ENCODE measurements at regions of chr1 and their contacts with region 1.

Region 1: GRCh38 chr1:240027059-240027462 is 64.6 kb upstream of the FMN2 start:
- DNase-seq: peak; percentile 67
- ATAC-seq: peak; percentile 64
- H3K4me3 ChIP-seq: no peak overlapping the region
- H3K27ac ChIP-seq: no peak overlapping the region
- H3K4me1 ChIP-seq: peaks cover 10% of the 10 kb centered on the region
- H3K27me3 ChIP-seq: no peaks in the 10 kb centered on the region
- CTCF ChIP-seq: peak; percentile 98
- POLR2A ChIP-seq: no peak
- RAD21 ChIP-seq: peak; percentile 96

Region 2: DNA sequence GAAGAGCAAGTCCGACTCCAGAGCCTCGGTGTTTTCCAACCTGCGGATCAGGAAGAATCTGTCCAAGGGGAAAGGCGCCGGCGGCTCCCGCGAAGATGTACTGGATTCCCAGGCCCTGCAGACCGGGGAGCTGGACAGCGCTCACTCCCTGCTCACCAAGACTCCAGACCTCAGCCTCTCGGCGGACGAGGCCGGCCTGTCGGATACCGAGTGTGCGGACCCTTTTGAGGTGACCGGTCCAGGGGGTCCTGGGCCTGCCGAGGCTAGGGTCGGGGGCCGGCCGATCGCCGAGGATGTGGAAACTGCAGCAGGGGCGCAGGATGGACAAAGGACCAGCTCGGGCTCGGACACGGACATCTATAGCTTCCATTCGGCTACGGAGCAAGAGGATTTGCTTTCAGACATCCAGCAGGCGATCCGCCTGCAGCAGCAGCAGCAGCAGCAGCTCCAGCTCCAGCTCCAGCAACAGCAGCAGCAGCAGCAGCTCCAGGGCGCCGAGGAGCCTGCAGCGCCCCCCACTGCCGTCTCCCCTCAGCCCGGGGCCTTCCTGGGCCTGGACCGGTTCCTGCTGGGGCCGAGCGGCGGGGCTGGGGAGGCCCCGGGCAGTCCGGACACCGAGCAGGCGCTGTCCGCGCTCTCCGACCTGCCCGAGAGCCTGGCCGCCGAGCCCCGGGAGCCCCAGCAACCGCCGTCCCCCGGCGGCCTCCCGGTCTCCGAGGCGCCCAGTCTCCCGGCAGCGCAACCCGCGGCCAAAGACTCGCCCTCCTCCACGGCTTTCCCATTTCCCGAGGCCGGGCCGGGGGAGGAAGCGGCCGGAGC is 65.4 kb after region 1 on chr1:
- CTCF ChIA-PET with region 1: interaction called, 6 read pairs
- POLR2A ChIA-PET with region 1: no interaction called
- dilution Hi-C with region 1: no loop called
- in situ Hi-C with region 1: no loop called
- intact Hi-C with region 1: loop called (anchors 1 kb)
- DNase-seq: peak; percentile 74
- ATAC-seq: peak; percentile 57
- H3K4me3 ChIP-seq: peak overlapping the region; percentile 89
- H3K27ac ChIP-seq: peak overlapping the region; percentile 33
- H3K4me1 ChIP-seq: peaks cover 2% of the 10 kb centered on the region; the same call in 1 of the 2 replicates
- H3K27me3 ChIP-seq: no peaks in the 10 kb centered on the region
- CTCF ChIP-seq: peak; percentile 35
- POLR2A ChIP-seq: no peak
- RAD21 ChIP-seq: peak; percentile 15; the same call in 1 of the 2 replicates

Region 3: DNA sequence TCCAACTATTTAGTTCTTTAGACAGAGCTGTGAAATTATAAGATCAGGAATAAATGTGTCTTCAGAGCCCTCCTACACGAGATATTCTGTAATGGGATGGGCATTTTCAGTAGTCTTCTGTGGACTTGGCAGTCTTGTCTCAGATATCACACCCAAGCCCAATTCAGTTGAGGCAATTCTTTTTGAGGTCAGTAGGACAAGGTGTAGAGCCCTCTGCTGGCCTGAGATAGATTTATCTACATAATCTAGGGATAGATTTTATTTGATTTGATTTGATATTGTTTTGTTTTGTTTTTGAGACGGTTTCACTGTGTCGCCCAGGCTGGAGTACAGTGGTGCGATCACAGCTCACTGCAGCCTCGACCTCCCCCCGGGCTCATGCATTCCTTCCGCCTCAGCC is 142.1 kb after region 1 on chr1:
- CTCF ChIA-PET with region 1: interaction called, 4 read pairs
- POLR2A ChIA-PET with region 1: no interaction called
- dilution Hi-C with region 1: no loop called
- in situ Hi-C with region 1: no loop called
- intact Hi-C with region 1: loop called (anchors 5 kb)
- DNase-seq: peak; percentile 31
- ATAC-seq: peak; percentile 34; the same call in 1 of the 2 replicates
- H3K4me3 ChIP-seq: no peak overlapping the region
- H3K27ac ChIP-seq: no peak overlapping the region
- H3K4me1 ChIP-seq: no peaks in the 10 kb centered on the region
- H3K27me3 ChIP-seq: no peaks in the 10 kb centered on the region
- CTCF ChIP-seq: peak; percentile 40
- POLR2A ChIP-seq: no peak
- RAD21 ChIP-seq: 0 out of 2 replicates have a peak, but pooled peaks have one; percentile 16

Region 4: GRCh38 chr1:240611619-240612480 is 584.8 kb after region 1 on chr1 and contains the start of gene GREM2:
- CTCF ChIA-PET with region 1: no interaction called
- POLR2A ChIA-PET with region 1: no interaction called
- dilution Hi-C with region 1: no loop called
- in situ Hi-C with region 1: loop called (anchors 5 kb)
- intact Hi-C with region 1: loop called (anchors 5 kb)
- DNase-seq: peak; percentile 95
- ATAC-seq: peak; percentile 96
- H3K4me3 ChIP-seq: peak within 1 kb of the TSS; percentile 97
- H3K27ac ChIP-seq: peak within 1 kb of the TSS; percentile 23
- H3K4me1 ChIP-seq: peaks cover 9% of the 10 kb centered on the region
- H3K27me3 ChIP-seq: no peaks in the 10 kb centered on the region
- CTCF ChIP-seq: no peak
- POLR2A ChIP-seq: peak; percentile 60; the same call in 1 of the 2 replicates
- RAD21 ChIP-seq: no peak
- total RNA-seq, gene GREM2: 3.0 and 5.0 TPM in 2 replicates

Region 5: DNA sequence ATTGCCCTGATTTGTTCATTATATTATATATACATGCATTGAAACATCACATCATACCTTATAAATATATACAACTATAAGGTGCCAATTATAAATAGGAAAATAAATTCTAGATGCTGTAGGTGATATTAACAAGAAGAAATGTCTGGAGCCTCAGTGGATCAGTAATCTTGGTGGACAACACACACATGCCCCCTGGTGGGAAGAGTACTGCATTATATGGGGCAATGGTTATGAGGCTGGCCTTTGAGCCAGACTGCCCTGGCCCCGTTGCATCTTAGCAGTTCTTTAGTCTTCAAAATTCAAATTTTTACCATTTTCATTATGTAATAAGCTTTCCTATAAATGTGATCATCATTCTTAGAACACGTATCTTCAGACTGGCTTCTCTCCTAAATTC is 919.9 kb after region 1 on chr1:
- CTCF ChIA-PET with region 1: no interaction called
- POLR2A ChIA-PET with region 1: no interaction called
- dilution Hi-C with region 1: no loop called
- in situ Hi-C with region 1: no loop called
- intact Hi-C with region 1: loop called (anchors 10 kb)
- DNase-seq: peak; percentile 54
- ATAC-seq: peak; percentile 97
- H3K4me3 ChIP-seq: no peak overlapping the region
- H3K27ac ChIP-seq: no peak overlapping the region
- H3K4me1 ChIP-seq: no peaks in the 10 kb centered on the region
- H3K27me3 ChIP-seq: no peaks in the 10 kb centered on the region; the same call in 1 of the 2 replicates
- CTCF ChIP-seq: peak; percentile 75
- POLR2A ChIP-seq: no peak
- RAD21 ChIP-seq: peak; percentile 80